Mammary epithelial cell (primary cell): ENCODE measurements at regions of chr2 and their contacts with region 1.

Region 1: DNA sequence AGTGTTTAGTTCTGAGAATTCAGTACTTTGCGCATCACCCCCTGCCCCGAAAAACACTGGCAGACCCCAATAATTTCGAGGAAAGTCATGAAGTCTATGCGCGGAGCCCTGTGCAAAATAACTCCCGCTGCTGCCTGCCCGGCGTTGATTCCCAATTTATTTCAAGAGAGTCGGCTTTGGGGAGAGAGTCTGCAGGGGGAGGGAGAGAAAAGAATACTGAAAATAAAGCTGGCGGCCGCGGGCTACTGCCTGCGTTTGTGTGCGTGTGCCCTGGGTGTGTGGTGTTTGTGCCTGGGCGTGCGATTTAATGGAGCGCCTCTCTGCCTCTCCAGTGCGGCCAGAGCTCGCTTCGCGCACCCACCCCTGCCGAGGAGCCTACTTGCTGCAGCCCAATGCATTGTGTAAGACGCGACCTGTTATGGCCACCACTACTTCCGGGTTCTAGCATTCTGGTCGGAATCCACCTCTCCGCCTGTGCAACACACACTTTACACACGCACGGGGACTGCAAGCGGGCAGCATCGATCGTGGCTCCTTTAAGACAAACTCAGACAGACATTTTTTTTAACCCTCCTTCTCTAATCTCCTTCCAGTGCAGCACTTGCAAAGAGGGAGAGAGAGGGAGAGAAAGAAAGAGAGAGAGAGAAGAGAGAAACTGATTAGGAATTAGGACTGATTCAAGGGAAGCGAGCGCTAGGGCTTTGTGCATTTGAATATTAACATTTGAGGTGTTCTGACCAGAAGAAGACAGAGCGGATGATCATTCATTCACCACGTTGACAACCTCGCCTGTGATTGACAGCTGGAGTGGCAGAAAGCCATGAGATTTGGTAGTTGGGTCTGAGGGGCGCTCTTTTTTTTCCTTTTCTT is at the start of gene MEIS1:
- DNase-seq: peak; percentile 95
- H3K4me3 ChIP-seq: peak within 1 kb of the TSS; percentile 90 to 97 (median 97)
- H3K27ac ChIP-seq: peak within 1 kb of the TSS; percentile 62
- H3K4me1 ChIP-seq: peaks cover 11% of the 10 kb centered on the region
- H3K27me3 ChIP-seq: no peaks in the 10 kb centered on the region
- CTCF ChIP-seq: no peak
- total RNA-seq, gene MEIS1: 4.3 to 4.4 TPM

Region 2: GRCh38 chr2:66495788-66496640 is 61.1 kb after region 1 on chr2:
- CTCF ChIA-PET with region 1: no interaction called
- dilution Hi-C with region 1: no loop called
- in situ Hi-C with region 1: loop called in 1 of 2 experiments (anchors 10 kb)
- intact Hi-C with region 1: loop called (anchors 2 kb)
- DNase-seq: peak; percentile 85
- H3K4me3 ChIP-seq: peak overlapping the region in 1 of 3 experiments; percentile 13
- H3K27ac ChIP-seq: peak overlapping the region; percentile 81
- H3K4me1 ChIP-seq: peaks cover 21% of the 10 kb centered on the region
- H3K27me3 ChIP-seq: no peaks in the 10 kb centered on the region
- CTCF ChIP-seq: peak in 1 of 2 donors; percentile 59

Region 3: GRCh38 chr2:66508484-66509071 is 73.7 kb after region 1 on chr2:
- CTCF ChIA-PET with region 1: no interaction called
- dilution Hi-C with region 1: no loop called
- in situ Hi-C with region 1: no loop called
- intact Hi-C with region 1: no loop called
- DNase-seq: no peak
- H3K4me3 ChIP-seq: no peak overlapping the region
- H3K27ac ChIP-seq: no peak overlapping the region
- H3K4me1 ChIP-seq: peaks cover 5% of the 10 kb centered on the region
- H3K27me3 ChIP-seq: no peaks in the 10 kb centered on the region
- CTCF ChIP-seq: no peak

Region 4: GRCh38 chr2:66587216-66587615 is 152.3 kb after region 1 on chr2:
- CTCF ChIA-PET with region 1: interaction called, 23 read pairs
- dilution Hi-C with region 1: no loop called
- in situ Hi-C with region 1: loop called in 1 of 2 experiments (anchors 10 kb)
- intact Hi-C with region 1: no loop called
- DNase-seq: peak; percentile 15
- H3K4me3 ChIP-seq: no peak overlapping the region
- H3K27ac ChIP-seq: no peak overlapping the region
- H3K4me1 ChIP-seq: no peaks in the 10 kb centered on the region
- H3K27me3 ChIP-seq: peaks cover 19% of the 10 kb centered on the region
- CTCF ChIP-seq: peak; percentile 5 to 41

Region 5: DNA sequence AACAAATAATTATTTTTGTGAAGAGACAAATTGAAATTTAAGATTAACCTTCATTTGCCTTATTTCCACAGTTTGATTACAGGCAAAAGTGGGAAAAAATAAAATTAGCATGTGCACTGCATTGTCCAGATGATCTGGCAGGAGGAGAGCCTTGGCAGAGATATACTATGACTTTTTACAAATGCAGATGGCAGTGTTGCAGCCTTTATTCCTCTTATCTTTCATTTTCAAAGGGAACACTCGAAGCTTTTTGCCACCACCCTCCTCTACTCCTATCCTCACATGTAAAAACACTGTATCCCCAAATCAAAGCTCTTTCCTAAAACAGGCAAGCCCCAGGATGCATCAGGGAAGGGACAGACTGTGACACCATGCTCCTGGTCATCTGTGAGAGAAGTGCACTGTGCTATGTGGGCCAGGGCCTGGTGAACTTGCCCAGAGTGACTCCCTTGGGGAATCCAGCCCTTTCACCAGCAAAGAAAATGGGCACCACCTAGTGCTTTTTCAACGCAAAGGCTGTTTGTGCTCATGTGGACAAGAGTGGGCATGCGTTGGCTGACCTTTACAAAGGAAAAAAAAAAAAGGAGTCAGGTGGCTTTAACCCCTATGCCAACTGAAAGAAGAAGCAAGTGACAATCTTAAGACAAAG is 887.6 kb after region 1 on chr2:
- CTCF ChIA-PET with region 1: no interaction called
- dilution Hi-C with region 1: no loop called
- in situ Hi-C with region 1: loop called (anchors 25 kb)
- intact Hi-C with region 1: loop called (anchors 1 kb)
- DNase-seq: peak; percentile 73
- H3K4me3 ChIP-seq: no peak overlapping the region
- H3K27ac ChIP-seq: no peak overlapping the region
- H3K4me1 ChIP-seq: peaks cover 3% of the 10 kb centered on the region
- H3K27me3 ChIP-seq: no peaks in the 10 kb centered on the region
- CTCF ChIP-seq: peak; percentile 82 to 87

Region 6: GRCh38 chr2:67463810-67464209 is 1028.9 kb after region 1 on chr2:
- CTCF ChIA-PET with region 1: interaction called, 11 read pairs
- dilution Hi-C with region 1: no loop called
- in situ Hi-C with region 1: loop called in 1 of 2 experiments (anchors 25 kb)
- intact Hi-C with region 1: no loop called
- DNase-seq: peak; percentile 99
- H3K4me3 ChIP-seq: no peak overlapping the region
- H3K27ac ChIP-seq: peak overlapping the region; percentile 90
- H3K4me1 ChIP-seq: peaks cover 36% of the 10 kb centered on the region
- H3K27me3 ChIP-seq: no peaks in the 10 kb centered on the region
- CTCF ChIP-seq: no peak

Region 7: DNA sequence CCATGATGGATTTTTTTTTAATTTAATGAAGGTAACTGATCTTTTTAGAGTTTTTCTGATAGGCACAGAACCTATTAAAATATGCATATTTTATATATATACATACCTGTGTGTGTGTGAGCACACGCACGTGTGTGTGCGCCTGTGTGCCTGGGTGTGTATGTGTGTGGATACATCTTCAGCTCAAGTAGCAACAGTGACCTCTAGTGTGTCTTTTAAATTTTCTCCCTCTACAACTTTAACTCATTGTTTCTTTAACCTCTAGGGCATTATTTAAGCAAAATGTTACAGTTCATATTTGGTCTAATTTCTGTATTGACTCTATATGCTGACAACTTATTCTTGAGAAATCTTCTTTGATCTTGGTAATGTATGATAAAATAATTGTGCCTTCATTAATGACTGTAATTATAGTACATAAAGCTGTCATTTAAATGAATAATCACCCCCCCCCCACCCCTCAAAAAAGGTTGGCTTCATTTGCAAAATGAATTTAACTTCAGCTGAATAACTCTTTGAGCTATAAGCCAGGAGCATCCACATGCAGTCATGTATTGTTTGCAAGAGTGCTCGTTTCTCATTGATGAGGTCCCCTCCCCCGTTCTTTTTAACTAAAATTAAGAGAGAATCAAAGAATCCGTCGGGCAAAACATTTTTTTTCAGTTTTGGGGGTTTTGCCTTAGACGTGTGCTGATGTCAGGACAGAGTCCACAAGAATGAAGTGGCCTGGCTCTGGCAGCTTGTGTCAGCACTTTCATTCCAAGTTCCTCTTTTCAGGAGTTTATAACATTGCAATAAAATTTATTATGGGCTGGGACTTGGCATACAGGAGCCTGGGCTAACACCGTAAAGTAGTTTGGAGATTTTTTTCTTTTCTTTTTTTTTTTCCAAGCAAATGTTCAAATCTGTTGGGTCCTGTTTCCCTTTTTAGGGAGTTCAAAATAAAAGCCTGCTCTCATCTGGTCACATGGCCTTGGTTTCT is 1042.2 kb after region 1 on chr2:
- CTCF ChIA-PET with region 1: no interaction called
- dilution Hi-C with region 1: no loop called
- in situ Hi-C with region 1: loop called in 1 of 2 experiments (anchors 25 kb)
- intact Hi-C with region 1: loop called (anchors 2 kb)
- DNase-seq: peak; percentile 41
- H3K4me3 ChIP-seq: no peak overlapping the region
- H3K27ac ChIP-seq: no peak overlapping the region
- H3K4me1 ChIP-seq: no peaks in the 10 kb centered on the region
- H3K27me3 ChIP-seq: no peaks in the 10 kb centered on the region
- CTCF ChIP-seq: peak; percentile 52 to 72

Region 8: DNA sequence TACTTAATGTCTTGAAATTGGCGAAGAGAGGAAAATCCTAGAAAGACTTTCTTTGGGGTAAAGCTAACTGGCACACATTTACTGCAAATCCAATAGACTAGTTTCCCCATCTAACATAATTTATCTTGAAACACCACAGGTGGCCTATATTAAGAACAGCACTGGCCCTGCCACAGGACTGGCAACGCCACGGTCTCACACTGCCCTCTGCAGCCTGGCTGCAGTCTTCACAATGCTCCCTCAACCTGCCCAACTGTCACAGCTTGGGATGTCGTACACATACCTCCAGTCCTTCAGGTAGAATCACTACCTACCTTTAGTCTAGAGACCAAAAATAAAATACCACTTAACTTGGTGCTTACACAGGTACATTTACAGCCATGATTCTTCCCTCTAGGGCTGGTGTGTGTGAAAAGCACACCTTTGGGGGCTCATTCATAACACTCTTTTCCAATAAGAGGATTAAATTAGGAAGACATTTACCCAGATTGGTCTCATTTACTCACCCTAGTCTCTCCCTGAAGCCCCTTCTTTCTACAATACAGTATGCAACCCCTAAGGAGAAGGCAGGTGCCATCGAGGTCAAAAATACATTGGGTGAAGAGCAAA is 1405.7 kb after region 1 on chr2:
- CTCF ChIA-PET with region 1: no interaction called
- dilution Hi-C with region 1: no loop called
- in situ Hi-C with region 1: loop called (anchors 25 kb)
- intact Hi-C with region 1: loop called (anchors 1 kb)
- DNase-seq: peak; percentile 56
- H3K4me3 ChIP-seq: no peak overlapping the region
- H3K27ac ChIP-seq: no peak overlapping the region
- H3K4me1 ChIP-seq: no peaks in the 10 kb centered on the region
- H3K27me3 ChIP-seq: no peaks in the 10 kb centered on the region
- CTCF ChIP-seq: peak; percentile 93 to 95